ENCODE measurements at regions of chr2 and their contacts with region 1.

Region 1: GRCh38 chr2:64488050-64488974 is 34.4 kb downstream of the LGALSL start:
- DNase-seq: peak; percentile 40 to 93
- H3K4me3 ChIP-seq: no peak overlapping the region
- CTCF ChIP-seq: peak in 1 of 3 donors; percentile 86
- POLR2A ChIP-seq: no peak

Region 2: GRCh38 chr2:64040161-64040560 is 448.2 kb before region 1 on chr2:
- intact Hi-C with region 1: loop called (anchors 10 kb)
- DNase-seq: no peak
- H3K4me3 ChIP-seq: no peak overlapping the region
- CTCF ChIP-seq: no peak
- POLR2A ChIP-seq: no peak